Caco-2 (cell line): ENCODE measurements at regions of chr2 and their contacts with region 1.

Region 1: DNA sequence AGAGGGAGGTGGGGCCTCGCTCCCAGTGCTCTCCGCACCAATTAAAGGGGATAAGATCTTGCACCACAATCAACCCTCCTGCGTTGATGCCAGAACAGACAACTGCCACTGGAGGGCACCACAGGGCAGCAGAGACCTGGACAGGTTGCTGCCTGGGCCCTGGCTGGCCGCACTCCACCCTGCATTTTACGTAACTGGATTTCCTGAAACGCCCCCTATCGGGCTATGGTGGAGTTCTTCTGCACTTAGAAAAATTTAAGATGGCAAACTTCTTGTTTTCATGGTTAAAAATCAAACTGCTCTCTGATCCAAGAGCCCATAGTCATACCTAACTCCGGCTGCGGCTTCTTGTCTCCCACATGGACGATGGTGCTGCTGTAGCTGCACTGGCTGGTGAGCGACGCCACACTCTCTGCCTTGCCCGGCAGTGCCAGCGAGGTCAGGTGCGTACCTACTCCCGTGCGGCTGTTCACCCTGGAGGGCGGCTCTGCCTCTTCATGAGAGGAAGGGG is 16.8 kb upstream of the HES6 start:
- DNase-seq: peak; percentile 86
- H3K4me3 ChIP-seq: no peak overlapping the region
- H3K4me3 Mint-ChIP-seq: no peak overlapping the region
- H3K27ac Mint-ChIP-seq: no peak overlapping the region
- H3K4me1 ChIP-seq: no peaks in the 10 kb centered on the region
- H3K4me1 Mint-ChIP-seq: no peaks in the 10 kb centered on the region
- H3K27me3 ChIP-seq: no peaks in the 10 kb centered on the region
- H3K27me3 Mint-ChIP-seq: no peaks in the 10 kb centered on the region
- CTCF ChIP-seq: peak; percentile 85

Region 2: DNA sequence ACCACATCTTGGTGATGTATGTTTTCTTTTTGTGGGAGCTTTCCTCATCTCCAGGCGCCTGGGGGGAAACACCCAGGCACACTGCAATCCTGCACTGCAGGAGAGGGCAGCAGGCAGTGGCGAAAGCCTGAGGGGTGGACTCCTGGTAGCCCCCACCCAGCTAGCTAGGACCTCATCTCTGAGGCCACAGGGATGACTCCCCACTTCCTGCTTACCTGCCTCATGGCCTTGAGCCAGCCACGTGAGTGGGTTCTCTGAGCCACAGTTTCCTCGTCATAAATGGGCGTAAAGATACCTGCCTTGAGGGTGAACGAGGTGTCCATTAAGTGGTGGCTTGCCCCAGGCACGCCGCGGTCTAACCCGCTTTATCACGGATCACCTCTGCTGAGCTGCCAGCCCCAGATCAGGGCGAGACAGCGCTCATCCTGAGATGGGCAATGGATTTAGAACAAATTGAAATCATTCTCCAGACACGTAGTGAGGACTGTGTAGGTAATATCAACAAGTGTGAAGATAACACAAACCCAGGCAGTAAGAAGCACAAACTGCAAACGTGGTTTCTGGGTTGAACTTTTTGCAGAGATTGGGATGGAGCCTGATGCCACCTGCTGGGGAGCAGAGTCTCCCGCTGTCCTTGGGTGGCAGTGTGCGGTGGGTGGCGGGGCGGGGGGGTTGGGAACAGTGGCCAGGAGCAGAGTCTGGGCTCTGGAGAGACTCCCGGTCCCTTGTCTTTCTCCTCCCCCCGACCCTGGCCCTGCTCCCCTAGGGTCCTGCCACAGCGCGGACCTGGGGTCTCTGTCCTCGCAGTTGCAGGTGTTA is 83.0 kb after region 1 on chr2:
- CTCF ChIA-PET with region 1: no interaction called
- POLR2A ChIA-PET with region 1: no interaction called
- intact Hi-C with region 1: loop called (anchors 1 kb)
- DNase-seq: peak in 1 of 2 experiments; percentile 21
- H3K4me3 ChIP-seq: no peak overlapping the region
- H3K4me3 Mint-ChIP-seq: no peak overlapping the region
- H3K27ac Mint-ChIP-seq: no peak overlapping the region
- H3K4me1 ChIP-seq: no peaks in the 10 kb centered on the region
- H3K4me1 Mint-ChIP-seq: no peaks in the 10 kb centered on the region
- H3K27me3 ChIP-seq: no peaks in the 10 kb centered on the region
- H3K27me3 Mint-ChIP-seq: no peaks in the 10 kb centered on the region
- CTCF ChIP-seq: peak in 1 of 2 experiments; percentile 34